ENCODE measurements at regions of chr17 and their contacts with region 1.

Region 1: GRCh38 chr17:76264755-76265596 is at the start of gene UBALD2:
- DNase-seq: peak; percentile 99
- ATAC-seq: peak; percentile 81
- H3K4me3 Mint-ChIP-seq: peak within 1 kb of the TSS; percentile 96
- H3K27ac Mint-ChIP-seq: peak within 1 kb of the TSS; percentile 100
- H3K4me1 Mint-ChIP-seq: peaks cover 52% of the 10 kb centered on the region
- H3K27me3 Mint-ChIP-seq: no peaks in the 10 kb centered on the region
- total RNA-seq, gene UBALD2: 299 to 639 TPM

Region 2: GRCh38 chr17:76182016-76182764 is 82.8 kb before region 1 on chr17:
- CTCF ChIA-PET with region 1: interaction called, 7 read pairs
- POLR2A ChIA-PET with region 1: interaction called, 29 read pairs
- intact Hi-C with region 1: no loop called
- DNase-seq: peak; percentile 98
- ATAC-seq: peak; percentile 76
- H3K4me3 Mint-ChIP-seq: peak overlapping the region; percentile 6
- H3K27ac Mint-ChIP-seq: peak overlapping the region; percentile 90
- H3K4me1 Mint-ChIP-seq: peaks cover 66% of the 10 kb centered on the region
- H3K27me3 Mint-ChIP-seq: no peaks in the 10 kb centered on the region

Region 3: DNA sequence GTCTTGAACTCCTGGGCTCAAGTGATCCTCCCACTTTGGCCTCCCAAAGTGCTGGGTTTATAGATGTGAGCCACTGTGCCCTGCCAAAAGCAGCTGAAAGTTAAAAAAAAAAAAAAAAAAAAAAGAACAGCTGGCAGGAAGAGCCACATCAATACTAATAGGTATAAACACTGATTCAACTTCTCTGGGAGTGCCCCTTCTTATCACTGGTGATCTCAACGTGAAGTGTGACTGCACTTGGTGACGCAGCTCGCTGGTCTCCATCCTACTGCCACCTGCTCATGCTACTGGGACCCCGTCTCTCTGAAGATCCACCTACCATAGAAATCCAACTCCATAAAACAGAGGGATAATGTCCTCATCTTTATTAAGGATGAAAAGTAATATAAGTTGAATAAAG is 65.5 kb before region 1 on chr17:
- CTCF ChIA-PET with region 1: interaction called, 6 read pairs
- POLR2A ChIA-PET with region 1: interaction called, 11 read pairs
- intact Hi-C with region 1: loop called in 1 of 2 experiments (anchors 1 kb)
- DNase-seq: peak; percentile 81
- ATAC-seq: peak; percentile 91
- H3K4me3 Mint-ChIP-seq: peak overlapping the region; percentile 21
- H3K27ac Mint-ChIP-seq: peak overlapping the region; percentile 92
- H3K4me1 Mint-ChIP-seq: peaks cover 64% of the 10 kb centered on the region
- H3K27me3 Mint-ChIP-seq: no peaks in the 10 kb centered on the region

Region 4: GRCh38 chr17:76246080-76247066 is 18.6 kb before region 1 on chr17:
- CTCF ChIA-PET with region 1: interaction called, 19 read pairs
- POLR2A ChIA-PET with region 1: interaction called, 28 read pairs
- intact Hi-C with region 1: loop called (anchors 1 kb)
- DNase-seq: peak; percentile 84
- ATAC-seq: peak; percentile 98
- H3K4me3 Mint-ChIP-seq: peak overlapping the region; percentile 53
- H3K27ac Mint-ChIP-seq: peak overlapping the region; percentile 89
- H3K4me1 Mint-ChIP-seq: peaks cover 59% of the 10 kb centered on the region
- H3K27me3 Mint-ChIP-seq: peaks cover 2% of the 10 kb centered on the region

Measured in activated CD4-positive, alpha-beta T cell treated with anti-CD3 and anti-CD28 coated beads for 36 hours (primary cell).